Spleen (tissue), 13 donors: ENCODE measurements at regions of chr22 and their contacts with region 1.

Region 1: DNA sequence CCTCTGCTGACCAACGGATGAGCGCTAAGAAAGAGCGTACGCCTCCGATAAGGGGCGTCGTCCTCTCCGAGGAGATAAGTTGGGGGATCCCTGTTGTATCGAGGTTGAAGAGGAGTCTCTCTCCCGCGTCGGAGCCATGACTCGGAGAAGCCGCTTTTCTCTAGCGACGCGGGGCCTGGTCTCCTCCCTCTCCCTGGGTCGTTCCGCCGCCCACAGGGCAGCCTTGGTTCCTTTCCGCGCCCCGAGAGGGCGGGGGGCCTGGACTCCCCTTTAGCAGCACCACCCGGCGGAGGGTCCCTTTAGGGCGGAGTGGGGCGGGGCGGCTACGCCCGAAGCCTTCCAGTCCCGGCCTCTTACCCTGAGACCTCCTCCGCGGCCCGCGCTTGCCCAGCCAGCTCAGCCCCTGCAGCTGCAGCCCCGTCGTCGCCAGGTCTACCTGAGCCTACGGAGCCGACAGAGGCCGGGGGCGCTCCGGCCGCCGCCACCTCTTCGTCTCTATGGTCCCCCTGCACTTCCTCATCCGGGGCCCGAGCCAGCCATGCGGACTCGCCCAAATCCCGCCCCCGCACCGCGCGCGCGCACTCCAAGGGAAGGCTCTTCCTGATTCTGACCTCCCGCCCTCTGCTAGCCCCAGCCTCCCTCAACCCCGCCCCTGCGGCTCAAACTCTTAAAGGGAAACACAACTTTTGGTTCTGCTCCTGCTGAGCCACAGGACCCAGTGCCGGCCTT is at the start of gene PRR14L:
- DNase-seq: peak; percentile 100
- H3K4me3 ChIP-seq: peak within 1 kb of the TSS; percentile 80 to 99 (median 96)
- H3K27ac ChIP-seq: peak within 1 kb of the TSS; percentile 90 to 98 (median 92)
- H3K4me1 ChIP-seq: peaks cover 39 to 93% (median 68%) of the 10 kb centered on the region in 6 donors
- H3K27me3 ChIP-seq: no peaks in the 10 kb centered on the region
- CTCF ChIP-seq: peak in 4 of 11 experiments; percentile 7 to 43 (median 16)
- POLR2A ChIP-seq: peak in 2 of 3 donors; percentile 23 to 72
- total RNA-seq, gene PRR14L: 33.5 to 65.4 (median 51.8) TPM

Region 2: GRCh38 chr22:31661851-31662656 is 87.7 kb before region 1 on chr22 and contains the start of gene PISD:
- intact Hi-C with region 1: loop called (anchors 10 kb)
- DNase-seq: peak; percentile 98
- H3K4me3 ChIP-seq: peak within 1 kb of the TSS; percentile 96 to 100 (median 99)
- H3K27ac ChIP-seq: peak within 1 kb of the TSS; percentile 58 to 87 (median 78)
- H3K4me1 ChIP-seq: peaks cover 8 to 50% (median 32%) of the 10 kb centered on the region in 6 donors
- H3K27me3 ChIP-seq: no peaks in the 10 kb centered on the region
- CTCF ChIP-seq: peak in 2 of 11 experiments; percentile 27 to 35
- POLR2A ChIP-seq: peak in 1 of 3 donors; percentile 18
- total RNA-seq, gene PISD: 52.6 to 108 (median 83.0) TPM